ENCODE measurements at regions of chr19 and their contacts with region 1.

Region 1: DNA sequence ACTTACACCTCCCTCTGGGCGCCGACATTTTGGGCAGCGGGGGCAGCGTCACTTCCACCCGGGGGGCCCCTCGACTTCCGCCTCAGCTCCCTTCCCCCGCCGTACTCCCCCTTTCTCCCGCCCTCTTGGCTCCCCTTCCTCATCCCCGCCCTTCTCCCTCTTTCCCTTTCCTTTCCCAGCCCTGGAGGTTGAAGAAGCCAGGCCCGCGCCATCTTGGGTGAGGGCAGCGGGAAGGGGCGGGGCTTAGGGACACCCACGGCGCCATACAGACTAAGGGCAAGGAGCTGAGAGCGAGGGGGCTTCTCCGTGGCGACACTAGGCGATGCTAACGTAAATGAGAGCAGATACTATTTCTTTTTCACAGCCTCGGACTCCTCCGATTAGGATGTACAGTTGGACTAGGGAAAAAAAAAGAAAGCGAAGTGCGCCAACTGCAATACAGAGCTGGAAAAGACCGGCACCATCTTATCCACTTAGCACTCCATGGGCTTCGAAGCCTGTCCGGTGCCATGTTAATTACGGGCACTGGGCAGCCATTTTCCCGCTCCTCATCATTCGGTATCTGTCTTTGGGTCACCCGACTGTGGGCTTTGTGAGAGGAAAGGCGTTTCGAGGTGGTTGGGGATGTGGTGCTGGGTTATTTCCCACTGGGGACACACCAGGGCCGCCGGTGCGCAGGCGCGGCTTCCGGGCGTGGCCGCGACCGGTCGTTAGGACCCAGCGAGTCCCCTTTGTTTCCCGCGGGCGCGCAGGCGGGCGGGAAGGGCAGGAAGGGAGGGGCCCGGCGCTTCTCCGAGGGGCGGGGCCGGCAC is at the start of gene FIZ1:
- DNase-seq: peak; percentile 88 to 97 (median 95)
- ATAC-seq: peak; percentile 84
- H3K4me3 ChIP-seq: peak within 1 kb of the TSS; percentile 93
- H3K4me3 Mint-ChIP-seq: peak within 1 kb of the TSS; percentile 90 to 100 (median 99)
- H3K27ac ChIP-seq: peak within 1 kb of the TSS; percentile 93
- H3K27ac Mint-ChIP-seq: peak within 1 kb of the TSS; percentile 97 to 100 (median 99)
- H3K4me1 ChIP-seq: peaks cover 0 to 15% of the 10 kb centered on the region in 2 donors
- H3K4me1 Mint-ChIP-seq: peaks cover 20 to 36% (median 30%) of the 10 kb centered on the region in 7 donors
- H3K27me3 ChIP-seq: no peaks in the 10 kb centered on the region
- H3K27me3 Mint-ChIP-seq: no peaks in the 10 kb centered on the region
- total RNA-seq, gene FIZ1: 9.4 to 32.0 (median 16.1) TPM

Region 2: GRCh38 chr19:55385740-55386529 is 213.7 kb before region 1 on chr19 and contains the start of gene RPL28:
- CTCF ChIA-PET with region 1: no interaction called
- POLR2A ChIA-PET with region 1: interaction called, 3 read pairs
- intact Hi-C with region 1: loop called in 1 of 2 experiments (anchors 1 kb)
- DNase-seq: peak; percentile 92 to 99 (median 99)
- ATAC-seq: peak; percentile 89
- H3K4me3 ChIP-seq: peak within 1 kb of the TSS; percentile 92
- H3K4me3 Mint-ChIP-seq: peak within 1 kb of the TSS; percentile 94 to 100 (median 100)
- H3K27ac ChIP-seq: peak within 1 kb of the TSS; percentile 91
- H3K27ac Mint-ChIP-seq: peak within 1 kb of the TSS; percentile 91 to 100 (median 99)
- H3K4me1 ChIP-seq: peaks cover 45 to 53% of the 10 kb centered on the region in 2 donors
- H3K4me1 Mint-ChIP-seq: peaks cover 41 to 79% (median 70%) of the 10 kb centered on the region in 7 donors
- H3K27me3 ChIP-seq: no peaks in the 10 kb centered on the region
- H3K27me3 Mint-ChIP-seq: peaks cover 0 to 3% (median 0%) of the 10 kb centered on the region in 5 donors
- total RNA-seq, gene RPL28: 2,549 to 3,799 (median 3,242) TPM

Region 3: GRCh38 chr19:55516878-55517620 is 82.6 kb before region 1 on chr19:
- CTCF ChIA-PET with region 1: no interaction called
- POLR2A ChIA-PET with region 1: interaction called, 3 read pairs
- intact Hi-C with region 1: loop called in 1 of 2 experiments (anchors 1 kb)
- DNase-seq: peak; percentile 77 to 94 (median 85)
- ATAC-seq: peak; percentile 100
- H3K4me3 ChIP-seq: peak overlapping the region; percentile 48
- H3K4me3 Mint-ChIP-seq: peak overlapping the region; percentile 74 to 89 (median 84)
- H3K27ac ChIP-seq: peak overlapping the region; percentile 66
- H3K27ac Mint-ChIP-seq: peak overlapping the region in 8 of 9 donors; percentile 55 to 96 (median 83)
- H3K4me1 ChIP-seq: peaks cover 3 to 4% of the 10 kb centered on the region in 2 donors
- H3K4me1 Mint-ChIP-seq: peaks cover 0 to 4% (median 4%) of the 10 kb centered on the region in 7 donors
- H3K27me3 ChIP-seq: no peaks in the 10 kb centered on the region
- H3K27me3 Mint-ChIP-seq: peaks cover 0 to 4% (median 3%) of the 10 kb centered on the region in 5 donors

Region 4: GRCh38 chr19:55546822-55547616 is 52.7 kb before region 1 on chr19:
- CTCF ChIA-PET with region 1: no interaction called
- POLR2A ChIA-PET with region 1: no interaction called
- intact Hi-C with region 1: no loop called
- DNase-seq: no peak
- ATAC-seq: peak; percentile 32
- H3K4me3 ChIP-seq: no peak overlapping the region
- H3K4me3 Mint-ChIP-seq: no peak overlapping the region
- H3K27ac ChIP-seq: no peak overlapping the region
- H3K27ac Mint-ChIP-seq: peak overlapping the region in 1 of 9 donors; percentile 49
- H3K4me1 ChIP-seq: no peaks in the 10 kb centered on the region
- H3K4me1 Mint-ChIP-seq: peaks cover 0 to 10% (median 0%) of the 10 kb centered on the region in 7 donors
- H3K27me3 ChIP-seq: no peaks in the 10 kb centered on the region
- H3K27me3 Mint-ChIP-seq: peaks cover 11 to 35% (median 17%) of the 10 kb centered on the region in 5 donors

Region 5: GRCh38 chr19:55566823-55567222 is 32.9 kb before region 1 on chr19:
- CTCF ChIA-PET with region 1: no interaction called
- POLR2A ChIA-PET with region 1: no interaction called
- intact Hi-C with region 1: no loop called
- DNase-seq: no peak
- ATAC-seq: no peak
- H3K4me3 ChIP-seq: no peak overlapping the region
- H3K4me3 Mint-ChIP-seq: no peak overlapping the region
- H3K27ac ChIP-seq: no peak overlapping the region
- H3K27ac Mint-ChIP-seq: no peak overlapping the region
- H3K4me1 ChIP-seq: no peaks in the 10 kb centered on the region
- H3K4me1 Mint-ChIP-seq: no peaks in the 10 kb centered on the region
- H3K27me3 ChIP-seq: no peaks in the 10 kb centered on the region
- H3K27me3 Mint-ChIP-seq: peaks cover 0 to 20% (median 6%) of the 10 kb centered on the region in 5 donors

Region 6: GRCh38 chr19:55624109-55625003 is 24.7 kb after region 1 on chr19 and contains the start of gene ZNF784:
- CTCF ChIA-PET with region 1: interaction called, 42 read pairs
- POLR2A ChIA-PET with region 1: interaction called, 76 read pairs
- intact Hi-C with region 1: loop called (anchors 1 kb)
- DNase-seq: peak; percentile 89 to 99 (median 95)
- ATAC-seq: peak; percentile 90
- H3K4me3 ChIP-seq: peak within 1 kb of the TSS; percentile 76
- H3K4me3 Mint-ChIP-seq: peak within 1 kb of the TSS; percentile 78 to 96 (median 90)
- H3K27ac ChIP-seq: peak within 1 kb of the TSS; percentile 100
- H3K27ac Mint-ChIP-seq: peak within 1 kb of the TSS; percentile 89 to 99 (median 98)
- H3K4me1 ChIP-seq: peaks cover 27 to 46% of the 10 kb centered on the region in 2 donors
- H3K4me1 Mint-ChIP-seq: peaks cover 26 to 65% (median 58%) of the 10 kb centered on the region in 7 donors
- H3K27me3 ChIP-seq: no peaks in the 10 kb centered on the region
- H3K27me3 Mint-ChIP-seq: peaks cover 0 to 18% (median 0%) of the 10 kb centered on the region in 5 donors
- total RNA-seq, gene ZNF784: 5.1 to 17.1 (median 9.0) TPM

Region 7: DNA sequence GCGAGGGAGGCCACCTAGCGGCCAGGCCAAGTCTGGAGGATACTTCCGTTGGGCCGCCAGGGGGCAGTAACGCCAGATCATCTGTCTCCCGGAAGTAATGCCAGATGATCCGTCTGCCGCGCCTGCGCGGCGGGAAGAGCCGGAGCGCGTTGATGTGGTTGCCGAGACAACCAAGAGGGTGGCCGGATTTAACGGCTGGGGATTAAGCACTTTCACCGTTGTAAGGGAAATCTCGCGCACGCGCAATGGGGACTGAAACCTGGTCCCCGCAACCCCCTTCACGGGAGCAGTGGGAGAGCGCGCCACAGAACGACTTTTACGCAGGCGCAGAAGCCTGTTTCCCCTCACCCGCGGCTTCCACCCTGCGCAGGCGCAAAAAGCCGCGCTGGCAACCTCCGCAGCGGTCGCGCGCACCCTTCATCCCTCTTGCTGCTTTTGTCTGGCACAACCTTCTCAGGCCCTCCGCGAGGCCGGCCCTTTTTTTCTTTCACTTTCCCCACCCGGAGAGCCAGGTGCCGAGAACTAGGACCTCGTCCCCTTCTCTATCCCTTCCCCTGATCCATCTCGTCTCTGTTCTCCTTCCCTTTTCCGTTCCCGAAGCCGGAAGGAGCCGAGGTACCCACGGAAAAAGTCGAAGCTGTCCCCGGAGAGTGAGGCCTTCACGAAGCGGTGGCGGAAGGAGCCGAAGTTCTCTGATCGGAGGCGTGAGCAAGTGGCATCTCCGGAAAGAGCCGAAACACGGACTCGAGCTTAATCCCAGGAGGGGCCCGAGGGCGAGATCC is 54.3 kb after region 1 on chr19:
- CTCF ChIA-PET with region 1: interaction called, 5 read pairs
- POLR2A ChIA-PET with region 1: interaction called, 13 read pairs
- intact Hi-C with region 1: loop called (anchors 1 kb)
- DNase-seq: peak; percentile 95 to 100 (median 100)
- ATAC-seq: peak; percentile 83
- H3K4me3 ChIP-seq: peak overlapping the region; percentile 98
- H3K4me3 Mint-ChIP-seq: peak overlapping the region; percentile 83 to 99 (median 96)
- H3K27ac ChIP-seq: peak overlapping the region; percentile 99
- H3K27ac Mint-ChIP-seq: peak overlapping the region; percentile 95 to 100 (median 99)
- H3K4me1 ChIP-seq: peaks cover 30 to 36% of the 10 kb centered on the region in 2 donors
- H3K4me1 Mint-ChIP-seq: peaks cover 29 to 55% (median 39%) of the 10 kb centered on the region in 7 donors
- H3K27me3 ChIP-seq: no peaks in the 10 kb centered on the region
- H3K27me3 Mint-ChIP-seq: peaks cover 0 to 2% (median 0%) of the 10 kb centered on the region in 5 donors

Region 8: DNA sequence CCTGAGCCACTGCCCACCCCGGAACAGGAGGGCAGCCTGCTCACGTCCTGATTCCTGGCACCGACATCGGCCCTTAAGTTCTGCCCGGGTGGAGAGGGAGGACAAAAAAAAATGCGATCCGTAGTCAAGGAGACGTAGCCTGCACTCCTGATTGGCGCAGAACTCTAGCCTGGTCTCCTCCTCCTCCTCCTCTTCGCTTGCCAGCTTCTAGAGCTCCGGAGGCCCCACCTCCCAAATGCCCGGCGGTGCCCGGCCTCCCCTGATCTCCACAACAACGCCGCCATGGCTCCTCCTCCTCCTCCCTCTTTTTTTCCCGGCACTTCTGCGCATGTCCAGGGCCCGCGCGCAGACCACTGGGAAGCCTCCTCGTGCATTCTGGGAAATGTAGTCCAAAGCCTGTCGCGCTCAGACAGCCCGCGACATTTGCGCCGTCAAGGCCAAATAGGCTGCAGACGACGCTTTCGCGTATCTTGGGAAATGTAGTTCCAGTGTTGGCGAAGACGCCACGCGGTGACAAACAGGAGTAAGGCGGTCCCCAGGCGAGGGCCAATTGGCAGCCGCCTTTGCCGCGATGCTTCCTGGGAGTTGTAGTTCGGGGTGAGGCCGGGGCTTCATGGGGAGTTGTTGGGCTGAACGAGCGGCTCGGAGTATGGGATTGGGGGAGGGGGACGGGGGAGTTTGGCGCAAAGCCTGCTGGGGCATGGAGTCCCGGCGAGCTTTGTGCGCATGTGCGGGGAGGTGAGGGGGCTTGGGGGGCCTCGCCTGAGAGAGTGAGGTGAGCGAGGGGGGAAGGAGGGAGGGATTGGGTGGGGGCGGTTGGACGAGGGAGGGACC is 541.1 kb after region 1 on chr19 and contains the start of gene ZNF444:
- CTCF ChIA-PET with region 1: no interaction called
- POLR2A ChIA-PET with region 1: no interaction called
- intact Hi-C with region 1: loop called (anchors 1 kb)
- DNase-seq: peak; percentile 93 to 100 (median 100)
- ATAC-seq: peak; percentile 91
- H3K4me3 ChIP-seq: peak within 1 kb of the TSS; percentile 60
- H3K4me3 Mint-ChIP-seq: peak within 1 kb of the TSS; percentile 88 to 97 (median 92)
- H3K27ac ChIP-seq: peak within 1 kb of the TSS; percentile 85
- H3K27ac Mint-ChIP-seq: peak within 1 kb of the TSS; percentile 84 to 98 (median 91)
- H3K4me1 ChIP-seq: peaks cover 4 to 22% of the 10 kb centered on the region in 2 donors
- H3K4me1 Mint-ChIP-seq: peaks cover 27 to 49% (median 43%) of the 10 kb centered on the region in 7 donors
- H3K27me3 ChIP-seq: no peaks in the 10 kb centered on the region
- H3K27me3 Mint-ChIP-seq: peaks cover 0 to 4% (median 0%) of the 10 kb centered on the region in 5 donors
- total RNA-seq, gene ZNF444: 22.2 to 49.6 (median 35.7) TPM

Measured in naive thymus-derived CD4-positive, alpha-beta T cell (primary cell).